Activated CD4-positive, alpha-beta memory T cell treated with anti-CD3 and anti-CD28 coated beads for 36 hours (primary cell): ENCODE measurements at regions of chr16 and their contacts with region 1.

Region 1: GRCh38 chr16:67641779-67642708 is 2.9 kb upstream of the CARMIL2 start:
- DNase-seq: no peak
- H3K4me3 Mint-ChIP-seq: no peak overlapping the region
- H3K27ac Mint-ChIP-seq: no peak overlapping the region
- H3K4me1 Mint-ChIP-seq: peaks cover 11% of the 10 kb centered on the region
- H3K27me3 Mint-ChIP-seq: no peaks in the 10 kb centered on the region

Region 2: GRCh38 chr16:67499106-67499505 is 142.9 kb before region 1 on chr16:
- CTCF ChIA-PET with region 1: interaction called, 12 read pairs
- POLR2A ChIA-PET with region 1: no interaction called
- intact Hi-C with region 1: no loop called
- DNase-seq: no peak
- H3K4me3 Mint-ChIP-seq: no peak overlapping the region
- H3K27ac Mint-ChIP-seq: no peak overlapping the region
- H3K4me1 Mint-ChIP-seq: peaks cover 9% of the 10 kb centered on the region
- H3K27me3 Mint-ChIP-seq: no peaks in the 10 kb centered on the region

Region 3: DNA sequence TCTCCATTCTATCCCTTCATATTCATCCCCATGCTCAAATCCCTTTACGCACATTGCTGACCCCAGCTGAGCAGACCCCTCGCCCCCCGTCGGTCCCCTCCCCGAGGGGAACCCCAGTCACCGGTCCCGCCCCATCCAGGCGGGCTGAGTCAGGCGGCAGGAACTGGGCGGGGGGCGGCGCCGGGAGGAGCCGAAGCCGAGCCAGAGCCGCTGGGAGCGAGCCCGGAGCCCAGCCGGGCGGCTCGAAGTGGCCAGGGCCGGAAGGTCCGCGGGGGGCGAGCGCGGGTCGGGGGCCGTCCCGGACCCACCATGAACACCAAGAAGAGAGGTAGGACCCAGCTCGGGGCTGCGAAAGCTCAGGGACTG is 104.8 kb before region 1 on chr16:
- CTCF ChIA-PET with region 1: interaction called, 19 read pairs
- POLR2A ChIA-PET with region 1: interaction called, 6 read pairs
- intact Hi-C with region 1: no loop called
- DNase-seq: peak; percentile 74
- H3K4me3 Mint-ChIP-seq: peak overlapping the region; percentile 76
- H3K27ac Mint-ChIP-seq: peak overlapping the region; percentile 26
- H3K4me1 Mint-ChIP-seq: peaks cover 15% of the 10 kb centered on the region
- H3K27me3 Mint-ChIP-seq: no peaks in the 10 kb centered on the region

Region 4: DNA sequence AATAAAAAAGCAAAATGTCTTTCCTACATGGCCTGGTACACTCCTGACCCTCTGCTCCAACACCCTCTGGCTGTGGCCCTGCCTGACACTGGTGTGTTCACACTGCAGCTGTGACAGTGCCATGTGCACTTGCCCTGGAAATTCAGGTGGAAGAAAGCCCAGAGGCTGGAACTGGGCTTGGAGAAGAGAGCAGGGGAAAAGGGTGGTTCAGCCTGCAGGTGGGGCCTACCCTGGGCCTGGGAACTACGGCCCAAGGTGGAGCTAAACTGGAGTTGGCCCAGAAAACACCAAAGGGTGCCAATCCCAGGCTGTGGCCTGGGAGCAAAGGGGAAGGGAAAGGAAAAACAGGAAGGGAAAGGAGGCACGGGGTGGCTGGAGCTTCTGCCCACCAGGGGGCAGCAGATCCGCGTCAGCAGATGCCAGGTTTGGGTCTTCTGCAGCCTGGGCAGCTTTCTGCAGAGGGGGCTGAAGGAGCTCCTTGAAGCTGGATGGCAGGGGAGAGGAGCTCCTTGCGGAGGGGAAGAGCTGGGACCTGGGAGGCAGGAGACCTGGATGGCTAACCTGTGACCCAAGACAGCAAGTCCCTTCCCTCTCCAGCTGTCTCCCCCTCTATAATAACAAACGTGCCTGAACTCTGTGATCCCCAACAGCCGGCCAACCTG is 95.2 kb before region 1 on chr16:
- CTCF ChIA-PET with region 1: interaction called, 243 read pairs
- POLR2A ChIA-PET with region 1: interaction called, 18 read pairs
- intact Hi-C with region 1: loop called (anchors 1 kb)
- DNase-seq: peak; percentile 81
- H3K4me3 Mint-ChIP-seq: no peak overlapping the region
- H3K27ac Mint-ChIP-seq: peak overlapping the region; percentile 89
- H3K4me1 Mint-ChIP-seq: peaks cover 34% of the 10 kb centered on the region
- H3K27me3 Mint-ChIP-seq: no peaks in the 10 kb centered on the region

Region 5: GRCh38 chr16:67555795-67556212 is 86.2 kb before region 1 on chr16:
- CTCF ChIA-PET with region 1: interaction called, 82 read pairs
- POLR2A ChIA-PET with region 1: interaction called, 8 read pairs
- intact Hi-C with region 1: no loop called
- DNase-seq: no peak
- H3K4me3 Mint-ChIP-seq: peak overlapping the region; percentile 59
- H3K27ac Mint-ChIP-seq: peak overlapping the region; percentile 99
- H3K4me1 Mint-ChIP-seq: peaks cover 54% of the 10 kb centered on the region
- H3K27me3 Mint-ChIP-seq: no peaks in the 10 kb centered on the region

Region 6: DNA sequence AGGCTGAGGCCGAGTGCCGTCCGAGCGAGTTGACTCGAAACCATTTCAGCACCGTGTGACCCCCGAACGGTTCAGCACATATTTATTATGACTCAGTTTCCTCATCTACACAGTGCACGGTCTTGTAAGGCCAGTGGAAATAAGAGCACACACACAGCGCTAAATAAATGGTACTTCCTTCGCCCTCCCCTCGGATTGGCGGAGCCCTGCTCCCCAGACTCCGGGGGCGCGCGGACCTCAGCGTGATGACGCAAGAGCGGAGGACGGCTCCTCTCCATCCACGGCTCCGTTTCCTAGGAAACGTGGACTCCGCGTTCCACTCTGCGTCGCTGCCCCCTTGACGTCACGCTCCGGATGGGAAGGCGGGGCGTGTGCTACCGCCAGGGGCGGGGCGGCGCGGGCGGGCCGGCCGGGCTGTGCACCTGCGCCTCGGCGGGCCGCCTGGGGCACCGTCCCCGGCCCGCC is 18.6 kb after region 1 on chr16 and contains the start of gene PARD6A:
- CTCF ChIA-PET with region 1: interaction called, 64 read pairs
- POLR2A ChIA-PET with region 1: interaction called, 23 read pairs
- intact Hi-C with region 1: no loop called
- DNase-seq: peak; percentile 98
- H3K4me3 Mint-ChIP-seq: peak within 1 kb of the TSS; percentile 86
- H3K27ac Mint-ChIP-seq: peak within 1 kb of the TSS; percentile 87
- H3K4me1 Mint-ChIP-seq: peaks cover 27% of the 10 kb centered on the region
- H3K27me3 Mint-ChIP-seq: no peaks in the 10 kb centered on the region
- total RNA-seq, gene PARD6A: 11.2 to 11.5 TPM

Region 7: GRCh38 chr16:68049449-68049848 is 407.4 kb after region 1 on chr16:
- CTCF ChIA-PET with region 1: no interaction called
- POLR2A ChIA-PET with region 1: no interaction called
- intact Hi-C with region 1: no loop called
- DNase-seq: no peak
- H3K4me3 Mint-ChIP-seq: no peak overlapping the region
- H3K27ac Mint-ChIP-seq: no peak overlapping the region
- H3K4me1 Mint-ChIP-seq: peaks cover 2% of the 10 kb centered on the region
- H3K27me3 Mint-ChIP-seq: no peaks in the 10 kb centered on the region